Gastrocnemius medialis (tissue), 4 donors: ENCODE measurements at regions of chr11 and their contacts with region 1.

Region 1: DNA sequence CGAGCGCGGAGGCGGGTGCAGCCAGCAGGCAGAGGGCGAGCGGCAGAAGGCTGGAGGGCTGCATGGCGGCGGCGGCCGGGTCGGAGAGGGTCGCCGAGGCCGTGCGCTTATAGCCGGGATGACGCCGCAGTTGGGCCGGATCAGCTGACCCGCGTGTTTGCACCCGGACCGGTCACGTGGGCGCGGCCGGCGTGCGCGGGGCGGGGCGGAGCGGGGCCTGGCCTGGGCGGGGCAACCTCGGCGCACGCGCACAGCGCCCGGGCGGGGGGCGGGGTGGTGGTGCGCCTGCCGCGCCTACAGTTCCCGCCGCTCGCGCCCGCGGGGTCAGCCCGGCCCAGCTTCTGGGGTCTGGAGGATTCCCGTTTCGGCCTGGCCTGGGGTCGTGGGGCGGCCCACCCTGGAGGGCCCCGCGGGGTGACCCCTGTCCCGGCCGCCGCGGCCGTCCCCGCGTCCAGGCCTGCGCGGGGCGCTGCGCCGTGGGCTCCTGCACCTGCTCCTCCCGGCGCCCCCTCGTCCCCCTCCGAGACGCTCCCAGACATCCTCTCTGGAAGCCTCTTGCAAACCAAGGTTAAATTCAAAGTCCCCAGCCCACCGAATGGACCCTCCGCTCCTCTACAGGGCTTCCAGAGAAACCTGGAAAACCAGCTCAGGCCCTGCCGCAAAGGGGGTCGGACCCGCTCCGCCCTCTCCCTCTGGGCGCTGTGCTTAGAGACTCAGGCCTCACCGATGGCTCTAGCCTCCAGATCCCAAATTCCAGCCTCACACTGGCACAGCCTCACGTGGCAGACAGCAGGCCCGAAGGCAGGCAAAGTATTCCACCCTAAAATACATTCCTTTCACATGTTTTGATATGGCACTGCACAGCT is at the start of gene CTSD:
- DNase-seq: peak; percentile 85 to 89
- ATAC-seq: peak; percentile 48 to 51
- H3K4me3 ChIP-seq: peak within 1 kb of the TSS; percentile 79 to 99 (median 94)
- H3K27ac ChIP-seq: peak within 1 kb of the TSS; percentile 98 to 100 (median 100)
- H3K4me1 ChIP-seq: peaks cover 32 to 38% of the 10 kb centered on the region in 2 donors
- H3K27me3 ChIP-seq: no peaks in the 10 kb centered on the region
- CTCF ChIP-seq: peak in 2 of 5 experiments; percentile 10 to 24
- POLR2A ChIP-seq: peak; percentile 95 to 97
- total RNA-seq, gene CTSD: 490 to 981 (median 845) TPM

Region 2: GRCh38 chr11:1598816-1599215 is 165.2 kb before region 1 on chr11:
- in situ Hi-C with region 1: no loop called
- intact Hi-C with region 1: no loop called
- DNase-seq: no peak
- ATAC-seq: no peak
- H3K4me3 ChIP-seq: no peak overlapping the region
- H3K27ac ChIP-seq: no peak overlapping the region
- H3K4me1 ChIP-seq: no peaks in the 10 kb centered on the region
- H3K27me3 ChIP-seq: peaks cover 0 to 6% (median 0%) of the 10 kb centered on the region in 3 donors
- CTCF ChIP-seq: no peak
- POLR2A ChIP-seq: no peak

Region 3: GRCh38 chr11:1744137-1744886 is 19.7 kb before region 1 on chr11:
- in situ Hi-C with region 1: no loop called
- intact Hi-C with region 1: loop called (anchors 1 kb)
- DNase-seq: peak; percentile 83 to 85
- ATAC-seq: peak; percentile 37 to 65
- H3K4me3 ChIP-seq: no peak overlapping the region
- H3K27ac ChIP-seq: peak overlapping the region; percentile 59 to 81 (median 72)
- H3K4me1 ChIP-seq: peaks cover 29 to 40% of the 10 kb centered on the region in 2 donors
- H3K27me3 ChIP-seq: no peaks in the 10 kb centered on the region
- CTCF ChIP-seq: no peak
- POLR2A ChIP-seq: no peak

Region 4: GRCh38 chr11:1749414-1750312 is 14.4 kb before region 1 on chr11:
- in situ Hi-C with region 1: no loop called
- intact Hi-C with region 1: loop called (anchors 1 kb)
- DNase-seq: peak in 1 of 2 donors; percentile 50
- ATAC-seq: peak; percentile 6 to 12
- H3K4me3 ChIP-seq: peak overlapping the region in 2 of 4 donors; percentile 44 to 62
- H3K27ac ChIP-seq: peak overlapping the region; percentile 83 to 90 (median 88)
- H3K4me1 ChIP-seq: peaks cover 71 to 80% of the 10 kb centered on the region in 2 donors
- H3K27me3 ChIP-seq: no peaks in the 10 kb centered on the region
- CTCF ChIP-seq: no peak
- POLR2A ChIP-seq: no peak

Region 5: GRCh38 chr11:2382936-2383851 is 619.2 kb after region 1 on chr11:
- in situ Hi-C with region 1: no loop called
- intact Hi-C with region 1: loop called (anchors 10 kb)
- DNase-seq: peak; percentile 74 to 88
- ATAC-seq: peak; percentile 78 to 81
- H3K4me3 ChIP-seq: peak overlapping the region; percentile 2 to 33 (median 16)
- H3K27ac ChIP-seq: peak overlapping the region; percentile 80 to 95 (median 91)
- H3K4me1 ChIP-seq: peaks cover 72 to 86% of the 10 kb centered on the region in 2 donors
- H3K27me3 ChIP-seq: no peaks in the 10 kb centered on the region
- CTCF ChIP-seq: peak in 1 of 5 experiments; percentile 29
- POLR2A ChIP-seq: peak; percentile 50 to 65

Region 6: DNA sequence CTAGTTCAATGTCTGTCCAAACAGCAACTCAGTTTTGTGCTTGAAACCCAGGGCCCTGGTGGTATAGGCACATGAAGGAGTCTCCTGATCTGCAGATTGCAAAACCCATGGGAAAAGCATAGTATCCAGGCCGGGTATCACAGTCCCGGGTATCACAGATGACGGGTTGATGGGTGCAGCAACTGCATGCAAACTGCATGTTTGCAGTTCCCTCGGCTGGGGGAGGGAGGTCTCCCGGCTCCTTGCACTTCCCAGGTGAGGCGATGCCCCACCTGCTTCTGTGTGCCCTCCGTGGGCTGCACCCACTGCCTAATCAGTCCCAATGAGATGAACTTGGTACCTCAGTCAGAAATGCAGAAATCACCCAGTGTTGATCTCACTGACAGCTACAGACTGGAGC is 734.7 kb after region 1 on chr11:
- in situ Hi-C with region 1: no loop called
- intact Hi-C with region 1: no loop called
- DNase-seq: no peak
- ATAC-seq: no peak
- H3K4me3 ChIP-seq: no peak overlapping the region
- H3K27ac ChIP-seq: no peak overlapping the region
- H3K4me1 ChIP-seq: no peaks in the 10 kb centered on the region
- H3K27me3 ChIP-seq: peaks cover 0 to 5% (median 5%) of the 10 kb centered on the region in 3 donors
- CTCF ChIP-seq: no peak
- POLR2A ChIP-seq: no peak